ENCODE measurements at regions of chr12 and their contacts with region 1.

Region 1: GRCh38 chr12:127108360-127109215 is 1158.4 kb upstream of the TMEM132C start:
- DNase-seq: peak; percentile 71 to 73
- ATAC-seq: peak; percentile 95 to 99
- H3K4me3 ChIP-seq: no peak overlapping the region
- H3K27ac ChIP-seq: no peak overlapping the region
- H3K4me1 ChIP-seq: peaks cover 17% of the 10 kb centered on the region; the same call in 2 of the 3 replicates
- CTCF ChIP-seq: peak; percentile 71
- EP300 ChIP-seq: no peak
- POLR2A ChIP-seq: no peak
- RAD21 ChIP-seq: peak; percentile 78 to 89

Region 2: DNA sequence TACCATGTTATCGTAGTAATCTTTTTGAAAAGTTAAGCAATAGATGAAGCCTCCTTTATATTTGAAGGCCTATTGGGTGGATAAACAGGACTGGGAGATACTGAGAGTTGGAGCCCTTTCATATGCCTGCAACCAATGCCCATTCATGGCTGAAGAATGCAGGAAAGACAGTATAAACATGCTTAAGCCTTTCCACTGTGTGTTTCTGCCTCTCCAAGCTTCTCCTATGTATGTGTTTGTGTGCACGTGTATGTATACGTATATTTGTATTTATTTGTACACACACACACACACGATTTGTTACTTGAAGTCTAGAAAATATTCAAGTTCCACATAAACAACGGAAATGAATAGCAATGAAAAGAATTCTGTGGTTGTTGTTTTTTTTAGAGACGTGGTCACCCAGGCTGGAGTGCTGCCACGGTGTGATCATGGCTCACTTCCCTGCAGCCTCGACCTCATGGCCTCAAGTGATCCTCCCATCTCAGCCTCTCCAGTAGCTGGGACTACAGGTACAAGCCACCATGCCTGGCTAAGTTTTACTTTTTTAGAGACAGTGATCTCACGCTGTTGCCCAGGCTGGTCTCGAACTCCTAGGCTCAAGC is 589.9 kb before region 1 on chr12:
- CTCF ChIA-PET with region 1: no interaction called
- POLR2A ChIA-PET with region 1: no interaction called
- DNase-seq: no peak
- ATAC-seq: no peak
- H3K4me3 ChIP-seq: no peak overlapping the region
- H3K27ac ChIP-seq: no peak overlapping the region
- H3K4me1 ChIP-seq: no peaks in the 10 kb centered on the region
- CTCF ChIP-seq: no peak
- EP300 ChIP-seq: no peak
- POLR2A ChIP-seq: no peak
- RAD21 ChIP-seq: no peak

Region 3: GRCh38 chr12:127121494-127122084 is 13.0 kb after region 1 on chr12:
- CTCF ChIA-PET with region 1: interaction called, 15 read pairs
- POLR2A ChIA-PET with region 1: no interaction called
- DNase-seq: no peak
- ATAC-seq: no peak
- H3K4me3 ChIP-seq: no peak overlapping the region
- H3K27ac ChIP-seq: no peak overlapping the region; a peak in 1 of 6 replicates
- H3K4me1 ChIP-seq: peaks cover 15% of the 10 kb centered on the region
- CTCF ChIP-seq: no peak
- EP300 ChIP-seq: no peak
- POLR2A ChIP-seq: no peak
- RAD21 ChIP-seq: no peak

Region 4: DNA sequence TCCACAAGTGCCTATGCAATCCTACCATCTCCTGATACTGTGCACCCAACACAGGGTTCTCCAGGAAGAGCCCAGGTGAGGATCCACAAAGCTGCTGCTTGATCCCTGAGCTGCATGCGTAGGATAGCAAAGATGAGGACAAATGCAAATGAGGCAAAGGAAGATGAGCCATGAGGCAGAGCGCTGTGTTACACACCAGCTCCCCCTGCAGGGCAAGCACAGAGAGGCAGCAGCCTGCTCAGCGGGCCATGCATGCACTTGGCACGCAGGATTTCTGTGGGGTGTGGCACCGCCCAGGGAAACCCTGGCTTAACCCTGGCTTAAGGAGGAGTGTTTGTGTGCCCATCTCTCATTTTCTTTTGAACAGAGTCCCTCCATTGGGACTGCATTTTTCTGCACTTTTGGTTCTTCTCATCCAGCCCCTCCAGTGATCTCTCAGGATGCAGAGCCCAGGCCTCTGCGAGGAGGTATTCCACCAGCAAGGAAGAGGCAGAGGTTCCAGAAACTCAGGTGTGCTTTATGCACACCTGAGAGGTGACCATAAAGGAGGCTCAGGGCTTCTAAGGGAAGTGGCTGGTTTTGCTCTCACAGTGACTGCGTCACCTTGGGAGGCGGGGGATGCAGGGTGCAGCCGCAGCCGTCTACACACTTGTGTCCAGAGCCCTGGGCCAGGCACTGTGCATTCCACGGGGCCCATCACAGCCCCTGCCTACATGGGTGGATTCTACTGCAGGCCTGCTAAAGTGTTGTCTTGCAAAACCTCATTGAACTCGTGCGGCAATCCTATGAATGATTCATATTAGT is 185.1 kb after region 1 on chr12:
- CTCF ChIA-PET with region 1: interaction called, 11 read pairs
- POLR2A ChIA-PET with region 1: no interaction called
- DNase-seq: peak; percentile 8 to 57
- ATAC-seq: peak; percentile 62 to 94; a peak in 4 of 6 replicates
- H3K4me3 ChIP-seq: no peak overlapping the region
- H3K27ac ChIP-seq: no peak overlapping the region
- H3K4me1 ChIP-seq: no peaks in the 10 kb centered on the region
- CTCF ChIP-seq: peak; percentile 36
- EP300 ChIP-seq: no peak
- POLR2A ChIP-seq: no peak
- RAD21 ChIP-seq: peak; percentile 50 to 79; a peak in 4 of 5 replicates

Region 5: DNA sequence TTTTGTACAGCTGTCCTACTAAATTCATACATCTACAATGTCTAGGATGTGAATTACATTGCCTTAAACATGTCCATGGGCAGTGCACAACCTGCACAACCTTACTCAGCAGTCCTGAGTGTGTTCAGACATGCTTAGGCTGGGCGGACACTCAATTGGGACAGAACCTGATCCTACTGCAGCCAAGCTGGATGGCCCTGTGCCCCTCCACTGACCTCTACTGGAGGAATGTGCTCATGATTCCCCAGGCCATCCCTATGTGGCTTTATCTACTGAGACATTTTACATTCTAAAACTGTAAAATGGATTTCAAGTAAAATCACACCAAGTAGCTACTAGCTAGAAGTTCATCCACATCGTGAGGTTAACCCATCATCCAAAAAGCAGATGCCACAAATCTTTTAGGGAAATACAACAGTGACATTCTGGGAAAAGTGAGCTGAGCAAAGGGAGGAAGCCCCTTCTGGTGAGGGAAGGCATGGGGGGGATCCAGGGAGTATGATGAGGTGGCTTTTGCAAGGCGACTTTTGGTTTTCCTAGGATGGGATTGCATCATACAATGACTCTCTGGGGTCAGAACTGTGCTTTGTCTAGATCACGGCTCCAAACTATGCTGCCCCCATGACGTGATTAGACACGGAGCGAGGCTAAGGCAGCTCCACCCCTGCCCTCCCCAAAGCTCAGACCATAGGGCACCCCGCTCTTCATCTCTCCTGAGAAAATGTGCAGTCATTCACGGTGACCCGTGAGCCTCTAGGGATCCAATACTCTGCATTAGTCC is 246.7 kb after region 1 on chr12:
- CTCF ChIA-PET with region 1: interaction called, 15 read pairs
- POLR2A ChIA-PET with region 1: no interaction called
- DNase-seq: peak; percentile 21 to 31
- ATAC-seq: peak in 1 of 2 experiments; percentile 84; a peak in 4 of 6 replicates
- H3K4me3 ChIP-seq: no peak overlapping the region
- H3K27ac ChIP-seq: no peak overlapping the region
- H3K4me1 ChIP-seq: no peaks in the 10 kb centered on the region
- CTCF ChIP-seq: peak; percentile 24; the same call in 2 of the 3 replicates
- EP300 ChIP-seq: no peak
- POLR2A ChIP-seq: no peak
- RAD21 ChIP-seq: peak in 1 of 2 experiments; percentile 51; a peak in 4 of 5 replicates

Region 6: DNA sequence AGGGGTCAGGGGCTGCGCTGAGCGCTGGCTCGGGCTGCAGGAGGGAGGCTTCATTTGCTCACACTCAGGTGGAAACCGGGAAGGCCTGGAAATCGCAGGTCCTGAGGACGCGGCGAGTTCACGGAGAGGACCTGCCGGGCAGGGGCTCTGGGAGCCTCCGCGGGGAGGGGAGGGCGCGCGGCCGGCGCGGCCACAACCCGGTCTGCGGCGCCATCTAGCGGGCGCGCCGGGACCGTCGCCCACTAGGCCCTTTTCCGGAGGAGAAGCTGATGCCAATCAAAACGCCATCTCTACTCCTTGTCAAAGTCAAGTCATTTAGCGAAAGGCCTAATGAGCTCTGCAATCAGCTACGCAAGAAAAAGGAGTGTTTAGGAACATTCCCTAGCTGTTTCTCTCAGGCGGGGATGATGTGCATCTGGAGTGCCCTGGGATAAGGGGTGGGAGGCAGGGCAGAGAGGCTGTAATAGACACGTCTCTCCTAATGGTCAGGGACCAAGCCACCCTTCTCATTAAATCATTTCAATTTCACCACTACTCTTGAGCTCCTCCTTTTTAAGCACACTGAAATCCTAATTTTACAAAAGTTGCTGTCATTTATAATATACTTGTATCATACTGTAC is 272.6 kb after region 1 on chr12:
- CTCF ChIA-PET with region 1: interaction called, 33 read pairs
- POLR2A ChIA-PET with region 1: no interaction called
- DNase-seq: peak; percentile 30 to 32
- ATAC-seq: peak; percentile 91 to 98
- H3K4me3 ChIP-seq: no peak overlapping the region
- H3K27ac ChIP-seq: no peak overlapping the region
- H3K4me1 ChIP-seq: no peaks in the 10 kb centered on the region
- CTCF ChIP-seq: peak; percentile 80
- EP300 ChIP-seq: no peak
- POLR2A ChIP-seq: no peak
- RAD21 ChIP-seq: peak; percentile 81 to 88

Measured in A549 (cell line).